ENCODE measurements at regions of chr1 and their contacts with region 1.

Region 1: DNA sequence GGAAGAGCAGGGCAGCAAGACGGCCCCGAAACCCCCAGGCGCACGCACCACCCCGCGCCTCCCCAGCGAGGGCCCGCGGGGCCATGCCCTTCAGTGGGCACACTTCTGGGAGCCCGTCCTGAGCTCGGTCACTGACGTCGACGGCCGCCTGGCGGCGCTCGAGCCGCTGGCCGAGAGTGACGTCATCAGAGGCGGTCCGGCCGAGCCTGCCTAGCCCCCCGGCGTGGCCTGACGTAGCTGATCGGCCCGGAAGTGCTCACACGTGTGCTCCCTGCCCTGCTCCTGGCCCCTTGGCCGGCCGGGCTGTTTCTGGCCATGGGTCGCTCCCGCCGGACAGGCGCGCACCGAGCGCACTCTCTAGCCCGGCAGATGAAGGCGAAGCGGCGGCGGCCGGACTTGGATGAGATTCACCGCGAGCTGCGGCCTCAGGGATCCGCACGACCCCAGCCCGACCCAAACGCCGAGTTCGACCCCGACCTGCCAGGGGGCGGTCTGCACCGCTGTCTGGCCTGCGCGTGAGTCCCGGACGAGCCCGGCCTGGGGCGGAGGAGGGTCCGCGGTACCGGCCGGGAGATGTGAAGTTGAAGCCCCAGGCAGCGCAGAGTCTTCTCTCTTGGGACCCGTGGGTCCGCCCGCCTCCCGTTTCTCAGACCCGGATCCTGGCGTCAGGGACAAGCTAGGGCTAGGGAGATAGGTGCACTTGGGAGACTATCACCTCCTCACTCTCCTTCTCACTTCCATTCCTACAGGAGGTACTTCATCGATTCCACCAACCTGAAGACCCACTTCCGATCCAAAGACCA is at the start of gene ZNF593:
- DNase-seq: peak; percentile 90
- ATAC-seq: peak; percentile 94
- H3K4me3 Mint-ChIP-seq: peak within 1 kb of the TSS; percentile 91
- H3K27ac Mint-ChIP-seq: peak within 1 kb of the TSS; percentile 84
- H3K4me1 Mint-ChIP-seq: peaks cover 16% of the 10 kb centered on the region
- H3K27me3 Mint-ChIP-seq: no peaks in the 10 kb centered on the region
- CTCF ChIP-seq: no peak
- total RNA-seq, gene ZNF593: 36.0 and 37.1 TPM in 2 replicates

Region 2: DNA sequence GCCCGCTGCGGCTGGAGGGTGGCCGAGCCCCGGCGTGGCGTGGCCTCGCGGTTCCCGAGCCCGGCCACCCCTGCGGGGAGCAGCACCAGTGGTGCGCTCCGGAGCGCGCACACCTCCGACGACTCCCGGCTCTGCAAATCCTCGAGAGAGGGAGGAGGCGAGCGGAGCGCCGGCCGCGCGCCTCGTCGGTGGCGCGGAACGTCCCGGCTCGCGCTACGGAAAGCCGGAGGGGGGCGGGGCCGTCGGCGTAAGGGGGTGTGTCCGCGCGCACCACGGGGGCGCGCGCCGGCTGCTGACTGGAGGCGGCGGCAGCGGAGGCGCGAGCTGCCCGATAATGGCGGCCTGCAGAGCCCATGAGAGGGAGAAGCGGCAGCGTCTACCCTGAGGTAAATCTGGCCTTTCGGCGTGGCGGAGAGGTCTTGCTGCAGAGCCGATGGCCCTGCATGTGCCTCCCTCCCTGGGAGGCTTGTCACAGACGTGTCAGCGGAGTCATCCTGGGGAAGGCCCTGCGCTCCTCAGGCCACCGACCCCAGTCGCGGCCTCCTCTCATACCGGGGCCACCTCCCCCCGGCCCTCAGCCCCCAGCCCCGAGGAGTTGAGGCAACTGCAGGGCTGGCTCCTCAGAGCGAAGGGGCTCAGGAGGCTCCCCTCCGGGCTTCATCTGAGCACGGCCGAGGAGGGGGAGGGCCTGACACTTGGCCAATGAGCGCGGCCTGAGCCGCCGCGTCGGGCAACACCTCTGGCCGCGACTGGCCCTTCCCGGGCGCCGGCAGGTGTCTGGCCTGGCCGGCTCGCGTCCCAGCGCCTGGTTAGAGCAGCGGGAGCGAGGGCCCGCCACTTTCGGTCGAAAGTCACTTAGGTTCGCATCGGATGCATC is 58.1 kb before region 1 on chr1 and contains the start of gene PDIK1L:
- CTCF ChIA-PET with region 1: no interaction called
- POLR2A ChIA-PET with region 1: interaction called, 4 read pairs
- intact Hi-C with region 1: loop called (anchors 2 kb)
- DNase-seq: peak; percentile 90
- ATAC-seq: peak; percentile 80
- H3K4me3 Mint-ChIP-seq: peak within 1 kb of the TSS; percentile 94
- H3K27ac Mint-ChIP-seq: peak within 1 kb of the TSS; percentile 89
- H3K4me1 Mint-ChIP-seq: peaks cover 20% of the 10 kb centered on the region
- H3K27me3 Mint-ChIP-seq: no peaks in the 10 kb centered on the region
- CTCF ChIP-seq: no peak
- total RNA-seq, gene PDIK1L: 9.4 and 10.5 TPM in 2 replicates

Region 3: GRCh38 chr1:26233903-26234643 is 64.2 kb after region 1 on chr1 and contains the start of gene CEP85:
- CTCF ChIA-PET with region 1: interaction called, 25 read pairs
- POLR2A ChIA-PET with region 1: interaction called, 13 read pairs
- intact Hi-C with region 1: loop called (anchors 1 kb)
- DNase-seq: peak; percentile 94
- ATAC-seq: peak; percentile 88
- H3K4me3 Mint-ChIP-seq: peak within 1 kb of the TSS; percentile 98
- H3K27ac Mint-ChIP-seq: peak within 1 kb of the TSS; percentile 94
- H3K4me1 Mint-ChIP-seq: peaks cover 34% of the 10 kb centered on the region
- H3K27me3 Mint-ChIP-seq: no peaks in the 10 kb centered on the region
- CTCF ChIP-seq: no peak
- total RNA-seq, gene CEP85: 13.8 and 16.4 TPM in 2 replicates

Region 4: GRCh38 chr1:26363549-26364448 is 193.9 kb after region 1 on chr1:
- CTCF ChIA-PET with region 1: interaction called, 9 read pairs
- POLR2A ChIA-PET with region 1: no interaction called
- intact Hi-C with region 1: loop called (anchors 1 kb)
- DNase-seq: peak; percentile 81
- ATAC-seq: peak; percentile 72
- H3K4me3 Mint-ChIP-seq: no peak overlapping the region
- H3K27ac Mint-ChIP-seq: no peak overlapping the region
- H3K4me1 Mint-ChIP-seq: peaks cover 27% of the 10 kb centered on the region
- H3K27me3 Mint-ChIP-seq: peaks cover 24% of the 10 kb centered on the region
- CTCF ChIP-seq: peak; percentile 90

Region 5: DNA sequence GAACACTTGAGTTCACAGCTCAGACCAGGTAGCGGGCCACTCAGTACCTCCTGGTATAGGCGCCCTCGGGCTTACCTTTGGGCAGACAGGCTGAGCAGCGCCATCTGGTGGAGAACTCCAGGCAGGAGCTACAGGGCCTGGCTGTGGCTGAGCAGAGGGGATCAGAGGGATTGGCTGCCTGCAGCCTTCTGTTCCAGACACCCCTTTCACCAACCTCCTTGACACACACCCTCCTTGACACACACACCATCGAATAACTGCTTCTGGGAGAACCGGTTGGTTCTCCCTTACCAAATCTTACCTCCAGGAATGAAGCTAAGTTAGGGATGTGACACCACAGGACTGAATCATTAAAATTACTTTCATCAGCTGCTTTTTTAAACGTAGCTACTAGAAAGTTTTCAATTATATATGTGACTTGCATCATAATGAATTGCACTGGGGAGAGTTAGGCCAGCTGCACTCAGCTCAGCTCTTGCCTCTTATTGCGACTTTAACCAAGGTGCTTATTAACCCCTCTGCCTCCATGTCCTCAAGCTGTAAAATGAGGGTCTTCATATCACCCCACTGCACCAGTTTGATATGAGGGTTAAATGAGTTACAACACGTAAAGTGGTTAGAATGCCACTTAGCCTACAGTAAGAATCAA is 247.4 kb after region 1 on chr1:
- CTCF ChIA-PET with region 1: interaction called, 11 read pairs
- POLR2A ChIA-PET with region 1: interaction called, 3 read pairs
- intact Hi-C with region 1: no loop called
- DNase-seq: peak; percentile 67
- ATAC-seq: peak; percentile 99
- H3K4me3 Mint-ChIP-seq: no peak overlapping the region
- H3K27ac Mint-ChIP-seq: no peak overlapping the region
- H3K4me1 Mint-ChIP-seq: no peaks in the 10 kb centered on the region
- H3K27me3 Mint-ChIP-seq: peaks cover 29% of the 10 kb centered on the region
- CTCF ChIP-seq: peak; percentile 35

Region 6: GRCh38 chr1:26490158-26490557 is 320.3 kb after region 1 on chr1:
- CTCF ChIA-PET with region 1: no interaction called
- POLR2A ChIA-PET with region 1: no interaction called
- intact Hi-C with region 1: no loop called
- DNase-seq: no peak
- ATAC-seq: no peak
- H3K4me3 Mint-ChIP-seq: no peak overlapping the region
- H3K27ac Mint-ChIP-seq: no peak overlapping the region
- H3K4me1 Mint-ChIP-seq: peaks cover 2% of the 10 kb centered on the region
- H3K27me3 Mint-ChIP-seq: no peaks in the 10 kb centered on the region
- CTCF ChIP-seq: no peak